B cell (primary cell): ENCODE measurements at regions of chr2 and their contacts with region 1.

Region 1: DNA sequence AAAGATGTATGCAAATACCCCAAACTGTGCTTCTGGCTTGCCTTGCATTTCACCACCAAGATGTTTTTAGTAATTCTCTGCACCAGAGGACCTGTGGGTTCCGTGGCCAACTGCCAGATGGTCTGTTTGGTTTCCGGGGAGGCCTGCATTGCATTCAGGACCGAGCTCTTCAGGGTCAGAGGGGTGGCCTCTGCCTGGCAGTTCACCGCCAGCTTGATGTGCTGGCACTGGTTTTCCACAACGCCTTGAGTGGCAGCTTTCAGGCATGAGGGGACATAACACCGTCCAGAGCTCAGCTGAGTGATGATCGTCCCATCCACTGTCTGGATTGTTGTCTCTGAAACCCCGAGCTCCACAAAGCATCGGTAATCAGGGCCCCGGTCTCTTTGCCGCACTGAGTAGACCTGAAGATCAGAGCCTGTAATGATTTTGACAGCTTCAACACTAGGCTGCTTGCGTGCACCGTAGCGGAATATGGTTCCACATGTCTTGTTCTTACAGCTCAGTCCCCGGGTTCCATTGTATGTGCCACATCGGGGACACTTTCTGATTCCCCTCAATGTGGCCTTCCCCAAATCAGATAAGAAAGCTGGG is 9.4 kb downstream of the C2orf42 start:
- DNase-seq: peak; percentile 41
- ATAC-seq: peak; percentile 81
- H3K4me3 ChIP-seq: peak overlapping the region in 2 of 5 experiments; percentile 22 to 33
- H3K4me3 Mint-ChIP-seq: peak overlapping the region; percentile 71
- H3K27ac ChIP-seq: peak overlapping the region; percentile 11 to 62
- H3K27ac Mint-ChIP-seq: peak overlapping the region; percentile 87
- H3K4me1 ChIP-seq: peaks cover 3 to 16% of the 10 kb centered on the region in 2 donors
- H3K4me1 Mint-ChIP-seq: peaks cover 12% of the 10 kb centered on the region
- H3K27me3 ChIP-seq: no peaks in the 10 kb centered on the region
- H3K27me3 Mint-ChIP-seq: no peaks in the 10 kb centered on the region
- CTCF ChIP-seq: no peak

Region 2: DNA sequence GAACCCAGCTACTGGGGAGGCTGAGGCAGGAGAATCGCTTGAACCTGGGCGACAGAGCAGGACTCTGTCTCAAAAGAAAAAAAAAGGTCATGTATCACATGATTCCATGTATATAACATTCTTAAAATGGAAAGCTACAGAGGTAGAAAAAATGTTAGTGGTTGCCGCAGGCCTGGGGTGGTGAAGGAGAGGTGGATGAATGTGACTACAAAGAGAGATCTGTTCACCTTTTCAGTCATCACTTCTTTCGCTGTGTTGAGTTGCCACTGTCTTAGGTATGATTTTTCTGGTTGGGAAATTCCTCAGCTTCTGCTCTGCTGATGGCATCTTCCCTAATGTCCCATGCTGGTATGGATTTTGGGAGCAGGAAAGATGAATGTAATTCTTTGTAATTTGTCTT is 293.0 kb before region 1 on chr2:
- CTCF ChIA-PET with region 1: no interaction called
- POLR2A ChIA-PET with region 1: no interaction called
- intact Hi-C with region 1: no loop called
- DNase-seq: no peak
- ATAC-seq: no peak
- H3K4me3 ChIP-seq: no peak overlapping the region
- H3K4me3 Mint-ChIP-seq: no peak overlapping the region
- H3K27ac ChIP-seq: no peak overlapping the region
- H3K27ac Mint-ChIP-seq: no peak overlapping the region
- H3K4me1 ChIP-seq: peaks cover 0 to 3% of the 10 kb centered on the region in 2 donors
- H3K4me1 Mint-ChIP-seq: peaks cover 7% of the 10 kb centered on the region
- H3K27me3 ChIP-seq: no peaks in the 10 kb centered on the region
- H3K27me3 Mint-ChIP-seq: no peaks in the 10 kb centered on the region
- CTCF ChIP-seq: no peak

Region 3: GRCh38 chr2:70115646-70116442 is 65.6 kb before region 1 on chr2:
- CTCF ChIA-PET with region 1: no interaction called
- POLR2A ChIA-PET with region 1: interaction called, 10 read pairs
- intact Hi-C with region 1: no loop called
- DNase-seq: peak; percentile 57
- ATAC-seq: peak; percentile 66
- H3K4me3 ChIP-seq: peak overlapping the region in 2 of 5 experiments; percentile 8 to 16
- H3K4me3 Mint-ChIP-seq: peak overlapping the region; percentile 65
- H3K27ac ChIP-seq: peak overlapping the region in 1 of 2 donors; percentile 46
- H3K27ac Mint-ChIP-seq: peak overlapping the region; percentile 89
- H3K4me1 ChIP-seq: peaks cover 23 to 44% of the 10 kb centered on the region in 2 donors
- H3K4me1 Mint-ChIP-seq: peaks cover 38% of the 10 kb centered on the region
- H3K27me3 ChIP-seq: no peaks in the 10 kb centered on the region
- H3K27me3 Mint-ChIP-seq: no peaks in the 10 kb centered on the region
- CTCF ChIP-seq: no peak